Activated B cell treated with CpG ODN at 0.5 μM for 24 hours (primary cell): ENCODE measurements at regions of chr11 and their contacts with region 1.

Region 1: GRCh38 chr11:66069715-66070603 is at the start of gene PACS1:
- DNase-seq: peak; percentile 82
- ATAC-seq: peak; percentile 75
- H3K4me3 Mint-ChIP-seq: peak within 1 kb of the TSS; percentile 92
- H3K27ac Mint-ChIP-seq: peak within 1 kb of the TSS; percentile 95
- H3K4me1 Mint-ChIP-seq: peaks cover 66% of the 10 kb centered on the region
- H3K27me3 Mint-ChIP-seq: no peaks in the 10 kb centered on the region
- CTCF ChIP-seq: no peak
- total RNA-seq, gene PACS1: 118 and 121 TPM in 2 replicates

Region 2: GRCh38 chr11:66045177-66045639 is 24.8 kb before region 1 on chr11:
- CTCF ChIA-PET with region 1: interaction called, 6 read pairs
- POLR2A ChIA-PET with region 1: interaction called, 3 read pairs
- intact Hi-C with region 1: loop called (anchors 1 kb)
- DNase-seq: peak; percentile 79
- ATAC-seq: peak; percentile 99
- H3K4me3 Mint-ChIP-seq: no peak overlapping the region
- H3K27ac Mint-ChIP-seq: no peak overlapping the region
- H3K4me1 Mint-ChIP-seq: peaks cover 9% of the 10 kb centered on the region
- H3K27me3 Mint-ChIP-seq: peaks cover 8% of the 10 kb centered on the region
- CTCF ChIP-seq: peak; percentile 63

Region 3: DNA sequence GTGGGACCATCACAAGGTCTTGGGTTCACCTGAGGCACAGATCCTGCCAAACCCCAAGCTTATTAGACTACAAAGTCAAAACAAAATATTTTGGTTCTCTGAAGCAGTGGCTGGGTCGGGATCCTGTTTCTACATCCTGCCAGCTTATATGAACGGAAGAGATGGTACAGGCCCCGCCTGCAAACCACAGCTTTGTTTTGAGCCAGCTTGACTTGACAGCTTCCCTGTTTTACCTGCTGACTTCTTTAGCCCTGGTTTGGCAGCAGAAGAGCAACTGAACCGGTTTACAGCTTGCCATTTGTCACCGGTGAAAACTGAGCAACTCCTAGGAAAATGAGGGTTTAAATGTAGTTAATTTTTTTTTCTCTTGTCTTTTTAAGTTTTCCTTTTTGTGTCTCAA is 11.5 kb after region 1 on chr11:
- CTCF ChIA-PET with region 1: interaction called, 5 read pairs
- POLR2A ChIA-PET with region 1: interaction called, 59 read pairs
- intact Hi-C with region 1: loop called (anchors 1 kb)
- DNase-seq: peak; percentile 50
- ATAC-seq: peak; percentile 90
- H3K4me3 Mint-ChIP-seq: peak overlapping the region; percentile 80
- H3K27ac Mint-ChIP-seq: peak overlapping the region; percentile 98
- H3K4me1 Mint-ChIP-seq: peaks cover 94% of the 10 kb centered on the region
- H3K27me3 Mint-ChIP-seq: no peaks in the 10 kb centered on the region
- CTCF ChIP-seq: no peak

Region 4: DNA sequence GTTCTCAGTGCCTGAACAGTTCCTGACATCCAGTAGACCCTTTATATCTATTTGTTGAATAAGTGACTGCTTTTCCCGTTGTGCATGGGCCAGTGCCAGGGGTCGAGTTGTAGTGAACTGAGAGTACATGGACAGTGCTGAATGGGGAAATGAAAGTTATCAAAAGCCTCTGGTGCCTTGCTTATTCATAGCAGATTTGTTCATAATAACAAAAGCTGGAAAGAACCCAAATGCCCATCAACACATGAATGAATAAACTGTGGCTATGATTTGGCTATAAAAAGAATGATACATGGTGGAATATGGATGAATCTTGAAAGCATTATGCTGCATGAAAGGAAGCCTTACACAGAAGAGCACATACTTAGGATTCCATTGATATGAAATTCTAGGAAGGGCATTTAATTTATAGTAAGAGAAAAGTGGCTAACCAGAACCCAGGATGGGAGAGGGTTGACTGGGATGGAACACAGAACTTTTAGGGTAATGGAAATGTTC is 42.7 kb after region 1 on chr11:
- CTCF ChIA-PET with region 1: interaction called, 10 read pairs
- POLR2A ChIA-PET with region 1: interaction called, 21 read pairs
- intact Hi-C with region 1: no loop called
- DNase-seq: no peak
- ATAC-seq: peak; percentile 53
- H3K4me3 Mint-ChIP-seq: peak overlapping the region; percentile 58
- H3K27ac Mint-ChIP-seq: peak overlapping the region; percentile 83
- H3K4me1 Mint-ChIP-seq: peaks cover 96% of the 10 kb centered on the region
- H3K27me3 Mint-ChIP-seq: no peaks in the 10 kb centered on the region
- CTCF ChIP-seq: no peak

Region 5: DNA sequence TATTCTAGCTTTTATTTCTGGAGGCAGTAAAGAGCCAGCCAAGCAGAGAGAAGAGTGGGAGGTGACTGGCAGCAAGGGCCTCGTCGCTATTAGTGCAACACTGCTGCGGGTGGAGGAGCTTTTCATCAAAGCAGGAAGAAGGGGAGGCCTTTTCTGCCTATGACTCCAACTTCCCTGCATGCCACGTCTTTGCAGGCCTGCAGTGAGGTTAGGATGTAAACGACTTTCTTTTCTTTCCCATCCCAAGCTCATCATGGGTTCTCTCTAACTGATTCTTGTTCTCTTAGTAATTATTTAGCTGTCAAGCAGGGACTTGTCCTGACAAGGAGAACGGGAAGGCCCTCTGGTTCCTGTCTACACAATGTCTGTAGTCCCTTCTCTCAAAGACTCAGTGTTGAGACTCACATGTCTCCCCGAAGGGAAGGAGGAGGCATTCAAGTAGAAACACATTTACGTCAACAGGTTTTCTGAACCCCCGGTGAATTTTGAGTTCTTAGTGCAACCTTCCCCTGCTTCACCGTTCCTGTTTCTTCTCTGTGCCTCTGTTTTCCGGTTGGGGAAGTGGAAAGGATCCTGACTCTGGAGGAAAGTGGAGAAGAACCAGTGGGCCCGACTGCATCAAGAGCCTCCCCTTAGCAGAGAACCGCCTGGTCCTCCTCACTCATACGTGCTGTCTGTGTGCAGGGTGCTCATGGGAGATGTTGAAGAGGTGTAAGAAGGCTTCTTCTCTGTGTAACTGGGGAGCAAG is 57.0 kb after region 1 on chr11:
- CTCF ChIA-PET with region 1: interaction called, 18 read pairs
- POLR2A ChIA-PET with region 1: interaction called, 44 read pairs
- intact Hi-C with region 1: loop called (anchors 1 kb)
- DNase-seq: peak; percentile 35
- ATAC-seq: peak; percentile 80
- H3K4me3 Mint-ChIP-seq: peak overlapping the region; percentile 84
- H3K27ac Mint-ChIP-seq: peak overlapping the region; percentile 98
- H3K4me1 Mint-ChIP-seq: peaks cover 89% of the 10 kb centered on the region
- H3K27me3 Mint-ChIP-seq: no peaks in the 10 kb centered on the region
- CTCF ChIP-seq: no peak

Region 6: DNA sequence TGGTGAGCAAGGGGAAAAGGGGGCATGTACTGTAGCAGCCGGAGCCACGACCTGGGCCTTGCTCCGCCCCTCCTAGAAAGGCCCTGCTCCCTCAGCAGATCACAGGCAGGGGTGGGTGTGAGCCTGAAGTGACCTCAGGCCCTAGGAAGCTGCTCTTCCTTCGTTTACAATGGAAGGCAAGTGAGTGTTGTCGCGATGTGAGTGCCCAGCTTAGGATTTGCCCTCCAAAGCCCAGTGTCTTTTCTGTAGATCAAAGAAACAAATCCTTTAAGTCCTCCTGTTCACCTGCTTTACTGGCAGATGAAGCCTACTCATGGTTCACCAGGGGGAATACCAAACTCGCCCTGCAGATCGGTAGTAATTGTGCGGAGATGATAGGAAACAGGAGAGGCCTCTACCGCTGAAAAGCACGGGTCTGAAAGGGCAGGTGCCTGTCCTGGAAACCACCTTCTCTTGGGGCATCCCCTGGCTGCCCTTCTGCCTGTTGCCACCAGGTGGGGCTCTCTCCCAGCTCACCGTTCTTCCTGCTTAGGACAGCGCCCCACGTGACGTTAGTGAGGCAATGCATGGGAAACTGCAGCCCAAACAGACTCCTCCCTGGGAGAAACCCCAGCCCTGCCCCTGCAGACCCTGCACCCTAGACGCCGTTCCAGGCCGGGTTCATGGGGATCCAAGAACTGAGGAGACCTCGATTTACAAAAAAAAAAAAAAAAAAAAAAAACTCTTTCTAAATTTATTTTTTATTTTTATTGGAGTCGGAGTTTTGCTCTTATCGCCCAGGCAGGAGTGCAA is 152.6 kb after region 1 on chr11:
- CTCF ChIA-PET with region 1: interaction called, 3 read pairs
- POLR2A ChIA-PET with region 1: interaction called, 4 read pairs
- intact Hi-C with region 1: loop called (anchors 1 kb)
- DNase-seq: peak; percentile 85
- ATAC-seq: peak; percentile 96
- H3K4me3 Mint-ChIP-seq: peak overlapping the region; percentile 64
- H3K27ac Mint-ChIP-seq: peak overlapping the region; percentile 99
- H3K4me1 Mint-ChIP-seq: peaks cover 20% of the 10 kb centered on the region
- H3K27me3 Mint-ChIP-seq: no peaks in the 10 kb centered on the region
- CTCF ChIP-seq: peak; percentile 93

Region 7: DNA sequence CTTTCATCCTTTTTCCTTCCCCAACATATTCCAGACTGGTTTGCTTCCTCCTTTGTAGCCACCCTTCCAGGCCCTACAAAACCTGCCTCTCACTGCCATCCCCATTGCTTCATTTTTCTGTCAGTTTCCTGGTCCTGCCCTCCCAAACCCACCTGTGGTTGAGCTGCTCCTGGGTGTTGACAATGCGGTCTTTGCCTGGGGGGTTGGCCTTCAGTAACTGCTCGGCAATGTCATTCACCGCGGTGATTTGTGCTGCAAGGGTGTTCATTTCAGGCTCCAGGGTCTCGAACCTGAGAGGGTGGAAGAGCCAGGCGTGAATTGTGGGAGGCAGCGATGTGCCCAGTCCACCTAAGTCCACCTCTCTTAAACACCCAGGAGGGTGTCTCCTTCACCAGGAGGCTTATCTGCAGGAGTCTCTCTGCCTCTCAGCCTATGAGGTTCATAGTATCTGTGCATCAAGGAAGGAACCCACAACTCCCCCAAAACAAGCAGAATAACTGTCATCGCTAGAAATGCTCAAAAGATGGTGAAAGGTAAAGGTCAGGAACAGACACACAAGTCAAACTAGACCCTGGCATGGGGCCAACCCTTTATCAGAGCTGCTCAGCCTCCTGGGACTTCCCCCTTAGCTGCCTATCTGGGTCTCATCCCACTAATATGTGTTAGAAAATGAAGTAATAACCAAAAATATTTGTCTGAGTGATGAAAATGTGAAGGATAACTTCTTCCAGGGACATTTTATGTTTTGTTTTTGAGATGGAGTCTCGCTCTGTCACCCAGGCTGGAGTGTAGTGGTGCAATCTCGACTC is 631.7 kb after region 1 on chr11:
- CTCF ChIA-PET with region 1: no interaction called
- POLR2A ChIA-PET with region 1: no interaction called
- intact Hi-C with region 1: no loop called
- DNase-seq: no peak
- ATAC-seq: no peak
- H3K4me3 Mint-ChIP-seq: no peak overlapping the region
- H3K27ac Mint-ChIP-seq: no peak overlapping the region
- H3K4me1 Mint-ChIP-seq: no peaks in the 10 kb centered on the region
- H3K27me3 Mint-ChIP-seq: no peaks in the 10 kb centered on the region
- CTCF ChIP-seq: no peak